ENCODE measurements at regions of chr16 and their contacts with region 1.

Region 1: GRCh38 chr16:22190776-22191531 is 15.1 kb upstream of the EEF2K start:
- DNase-seq: peak; percentile 100
- ATAC-seq: peak; percentile 68
- H3K4me3 Mint-ChIP-seq: peak overlapping the region; percentile 86
- H3K27ac Mint-ChIP-seq: peak overlapping the region; percentile 98
- H3K4me1 Mint-ChIP-seq: peaks cover 53% of the 10 kb centered on the region
- H3K27me3 Mint-ChIP-seq: no peaks in the 10 kb centered on the region

Region 2: DNA sequence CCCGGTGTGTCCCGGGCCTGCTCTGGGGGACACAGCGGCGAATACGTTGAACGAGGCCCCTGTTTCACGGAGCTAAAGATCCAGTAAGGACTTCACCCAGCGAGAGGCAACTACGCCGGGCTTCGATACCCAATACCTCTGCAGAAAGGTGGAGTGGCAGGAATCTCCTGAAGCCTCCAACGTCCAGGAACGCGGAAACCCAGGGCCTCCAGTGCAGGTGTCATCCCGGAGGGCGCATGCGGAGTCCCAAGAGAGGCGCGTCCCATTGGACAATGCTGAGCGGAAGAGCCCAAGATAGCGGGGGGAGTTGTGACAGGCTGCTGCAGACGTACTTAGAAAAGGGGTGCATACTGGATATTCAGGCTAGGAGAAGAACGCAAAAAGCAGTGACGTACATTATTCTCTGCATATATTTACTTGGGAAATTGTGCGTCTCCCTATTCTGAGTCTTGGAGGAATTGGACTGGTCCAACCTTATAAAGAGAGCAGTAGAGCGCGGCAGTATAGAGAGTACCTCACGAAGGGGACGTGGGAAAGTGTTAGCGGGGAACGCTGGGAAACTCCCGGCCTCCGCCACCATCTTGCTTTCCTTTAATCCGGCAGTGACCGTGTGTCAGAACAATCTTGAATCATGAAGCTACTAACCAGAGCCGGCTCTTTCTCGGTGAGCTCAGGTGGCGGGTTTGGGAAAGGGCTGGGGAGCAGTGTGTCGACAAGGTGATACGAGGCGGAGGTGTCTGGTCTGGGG is 238.0 kb before region 1 on chr16 and contains the start of gene UQCRC2:
- CTCF ChIA-PET with region 1: interaction called, 14 read pairs
- DNase-seq: peak; percentile 92
- ATAC-seq: peak; percentile 95
- H3K4me3 Mint-ChIP-seq: peak within 1 kb of the TSS; percentile 98
- H3K27ac Mint-ChIP-seq: peak within 1 kb of the TSS; percentile 92
- H3K4me1 Mint-ChIP-seq: peaks cover 61% of the 10 kb centered on the region
- H3K27me3 Mint-ChIP-seq: no peaks in the 10 kb centered on the region
- total RNA-seq, gene UQCRC2: 217 to 279 TPM

Region 3: GRCh38 chr16:22001591-22001990 is 189.4 kb before region 1 on chr16:
- CTCF ChIA-PET with region 1: interaction called, 102 read pairs
- DNase-seq: no peak
- ATAC-seq: no peak
- H3K4me3 Mint-ChIP-seq: no peak overlapping the region
- H3K27ac Mint-ChIP-seq: no peak overlapping the region
- H3K4me1 Mint-ChIP-seq: peaks cover 10% of the 10 kb centered on the region
- H3K27me3 Mint-ChIP-seq: no peaks in the 10 kb centered on the region

Region 4: DNA sequence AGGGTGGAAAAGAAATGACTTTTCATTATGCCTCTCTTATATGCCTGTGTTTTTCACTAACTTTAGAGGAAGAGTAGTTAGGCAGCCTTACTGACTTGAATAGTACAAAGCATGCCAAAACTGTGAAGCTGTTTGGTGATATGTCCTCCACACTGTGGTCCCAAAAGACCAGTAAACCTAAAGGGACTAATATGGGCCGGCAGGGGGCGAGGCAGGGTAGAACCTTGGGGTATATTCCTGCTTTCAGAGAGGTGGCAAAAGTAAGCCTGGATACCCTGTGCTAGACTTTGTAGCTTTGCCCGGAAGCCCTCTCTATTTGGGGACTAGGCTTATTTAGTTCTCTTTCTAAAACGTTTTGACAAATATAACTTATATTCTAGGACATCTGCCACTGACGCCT is 135.1 kb before region 1 on chr16:
- CTCF ChIA-PET with region 1: interaction called, 14 read pairs
- DNase-seq: no peak
- ATAC-seq: peak; percentile 29
- H3K4me3 Mint-ChIP-seq: no peak overlapping the region
- H3K27ac Mint-ChIP-seq: peak overlapping the region; percentile 70
- H3K4me1 Mint-ChIP-seq: peaks cover 31% of the 10 kb centered on the region
- H3K27me3 Mint-ChIP-seq: no peaks in the 10 kb centered on the region

Region 5: GRCh38 chr16:22098405-22099255 is 92.3 kb before region 1 on chr16:
- CTCF ChIA-PET with region 1: interaction called, 10 read pairs
- DNase-seq: no peak
- ATAC-seq: peak; percentile 89
- H3K4me3 Mint-ChIP-seq: no peak overlapping the region
- H3K27ac Mint-ChIP-seq: no peak overlapping the region
- H3K4me1 Mint-ChIP-seq: peaks cover 5% of the 10 kb centered on the region
- H3K27me3 Mint-ChIP-seq: peaks cover 17% of the 10 kb centered on the region

Region 6: GRCh38 chr16:22206013-22206841 is 15.3 kb after region 1 on chr16 and contains the start of gene EEF2K:
- CTCF ChIA-PET with region 1: interaction called, 102 read pairs
- DNase-seq: peak; percentile 92
- ATAC-seq: peak; percentile 95
- H3K4me3 Mint-ChIP-seq: peak within 1 kb of the TSS; percentile 97
- H3K27ac Mint-ChIP-seq: peak within 1 kb of the TSS; percentile 84
- H3K4me1 Mint-ChIP-seq: peaks cover 41% of the 10 kb centered on the region
- H3K27me3 Mint-ChIP-seq: no peaks in the 10 kb centered on the region
- total RNA-seq, gene EEF2K: 34.8 to 36.7 TPM

Region 7: DNA sequence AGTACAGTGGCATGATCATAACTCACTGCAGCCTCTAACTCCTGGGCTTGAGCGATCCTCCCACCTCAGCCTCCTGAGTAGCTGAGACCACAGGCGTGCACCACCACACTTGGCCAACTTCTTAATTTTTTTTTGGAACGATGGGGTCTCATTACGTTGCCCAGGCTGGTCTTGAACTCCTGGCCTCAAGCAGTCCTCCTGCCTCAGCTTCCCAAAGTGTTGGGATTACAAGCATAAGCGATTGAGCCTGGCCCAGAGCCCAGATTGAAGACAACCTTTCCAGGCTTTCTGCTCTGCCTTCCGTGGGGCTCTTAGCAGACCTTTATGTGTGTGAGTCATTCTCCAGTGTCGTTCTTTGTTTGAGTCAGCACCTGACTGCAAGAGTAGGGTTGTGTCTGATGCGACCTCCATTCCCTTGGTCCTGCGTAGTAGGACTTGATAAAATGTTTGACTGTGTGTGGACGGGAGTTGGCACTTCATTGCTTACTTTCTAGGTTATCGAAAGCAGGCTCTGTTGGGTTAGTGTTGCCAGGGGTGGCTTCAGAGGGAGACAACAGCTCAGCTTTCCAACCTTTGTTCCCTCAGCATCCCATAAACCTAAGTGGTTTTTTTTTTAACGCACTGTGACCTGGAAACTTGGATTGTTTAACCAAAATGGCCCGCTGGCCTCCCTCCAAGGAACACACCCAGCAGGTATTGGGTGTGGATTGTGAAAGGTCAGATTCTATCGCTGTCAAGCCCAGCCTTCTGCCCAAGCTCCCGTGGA is 41.5 kb after region 1 on chr16:
- CTCF ChIA-PET with region 1: no interaction called
- DNase-seq: peak; percentile 73
- ATAC-seq: peak; percentile 99
- H3K4me3 Mint-ChIP-seq: no peak overlapping the region
- H3K27ac Mint-ChIP-seq: peak overlapping the region; percentile 32
- H3K4me1 Mint-ChIP-seq: peaks cover 26% of the 10 kb centered on the region
- H3K27me3 Mint-ChIP-seq: no peaks in the 10 kb centered on the region